CD14-positive monocyte (primary cell): ENCODE measurements at regions of chr12 and their contacts with region 1.

Region 1: GRCh38 chr12:56117778-56118687 is at the start of gene ZC3H10:
- DNase-seq: peak; percentile 100
- H3K4me3 ChIP-seq: peak within 1 kb of the TSS; percentile 89 to 97 (median 89)
- H3K4me3 Mint-ChIP-seq: peak within 1 kb of the TSS; percentile 95 to 98
- H3K27ac ChIP-seq: peak within 1 kb of the TSS; percentile 92 to 98
- H3K27ac Mint-ChIP-seq: peak within 1 kb of the TSS; percentile 97 to 100 (median 99)
- H3K4me1 ChIP-seq: peaks cover 30 to 35% of the 10 kb centered on the region in 2 donors
- H3K4me1 Mint-ChIP-seq: peaks cover 38% of the 10 kb centered on the region
- H3K27me3 ChIP-seq: no peaks in the 10 kb centered on the region
- H3K27me3 Mint-ChIP-seq: no peaks in the 10 kb centered on the region
- CTCF ChIP-seq: peak; percentile 44
- polyA plus RNA-seq, gene ZC3H10: 1.7 to 3.1 (median 1.8) TPM

Region 2: GRCh38 chr12:55829967-55830600 is 287.9 kb before region 1 on chr12:
- intact Hi-C with region 1: loop called in 1 of 2 experiments (anchors 10 kb)
- DNase-seq: peak in 1 of 3 donors; percentile 11
- H3K4me3 ChIP-seq: peak overlapping the region; percentile 80 to 97 (median 89)
- H3K4me3 Mint-ChIP-seq: peak overlapping the region; percentile 96
- H3K27ac ChIP-seq: peak overlapping the region; percentile 73 to 87
- H3K27ac Mint-ChIP-seq: peak overlapping the region; percentile 89 to 96 (median 94)
- H3K4me1 ChIP-seq: peaks cover 47 to 54% of the 10 kb centered on the region in 2 donors
- H3K4me1 Mint-ChIP-seq: peaks cover 52% of the 10 kb centered on the region
- H3K27me3 ChIP-seq: no peaks in the 10 kb centered on the region
- H3K27me3 Mint-ChIP-seq: peaks cover 0 to 2% (median 0%) of the 10 kb centered on the region in 3 donors
- CTCF ChIP-seq: no peak

Region 3: DNA sequence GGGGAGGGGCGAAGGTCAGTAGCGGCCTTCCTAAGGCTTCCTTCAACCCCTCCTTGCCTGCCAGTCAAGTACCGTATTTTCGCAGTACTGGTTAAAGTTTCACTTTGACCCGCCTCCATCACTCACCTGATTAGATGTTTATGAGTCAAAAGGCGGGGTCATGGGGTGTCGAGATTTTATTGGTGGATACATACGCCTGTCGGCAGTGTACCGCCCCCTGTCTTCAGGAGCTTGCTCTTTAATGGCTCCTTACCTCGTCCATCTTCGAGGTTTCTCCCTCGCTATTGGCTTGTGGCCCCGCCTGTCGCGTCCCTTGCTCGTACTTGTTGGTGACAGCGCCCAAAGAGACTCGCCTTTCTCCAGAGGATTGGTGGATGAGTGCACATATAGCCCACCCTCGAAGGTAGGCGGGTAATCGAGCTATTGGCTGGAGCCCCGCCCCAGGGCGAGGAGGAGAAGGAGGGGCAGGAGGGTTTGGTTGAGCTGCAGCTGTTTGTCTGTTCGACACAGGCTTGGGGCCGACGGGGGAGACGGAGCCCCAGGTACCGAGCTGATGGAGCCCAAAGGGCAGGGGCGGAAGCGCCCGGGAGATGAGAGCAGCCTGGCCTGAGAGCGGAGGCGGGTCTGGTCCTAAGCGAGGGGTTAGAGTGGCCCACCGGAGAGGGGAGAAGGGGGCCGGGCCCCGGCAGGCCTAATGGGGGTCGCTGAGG is 144.3 kb before region 1 on chr12 and contains the start of gene RAB5B:
- intact Hi-C with region 1: loop called in 1 of 2 experiments (anchors 10 kb)
- DNase-seq: peak; percentile 99 to 100 (median 100)
- H3K4me3 ChIP-seq: peak within 1 kb of the TSS; percentile 82 to 98 (median 92)
- H3K4me3 Mint-ChIP-seq: no peak within 1 kb of the TSS
- H3K27ac ChIP-seq: peak within 1 kb of the TSS; percentile 83 to 90
- H3K27ac Mint-ChIP-seq: no peak within 1 kb of the TSS
- H3K4me1 ChIP-seq: peaks cover 26 to 42% of the 10 kb centered on the region in 2 donors
- H3K4me1 Mint-ChIP-seq: peaks cover 24% of the 10 kb centered on the region
- H3K27me3 ChIP-seq: no peaks in the 10 kb centered on the region
- H3K27me3 Mint-ChIP-seq: peaks cover 0 to 2% (median 0%) of the 10 kb centered on the region in 3 donors
- CTCF ChIP-seq: no peak
- polyA plus RNA-seq, gene RAB5B: 44.0 to 63.0 (median 48.5) TPM

Region 4: GRCh38 chr12:56152318-56153033 is 34.4 kb after region 1 on chr12 and contains the start of gene MYL6B:
- intact Hi-C with region 1: loop called in 1 of 2 experiments (anchors 5 kb)
- DNase-seq: peak; percentile 90 to 93 (median 93)
- H3K4me3 ChIP-seq: peak within 1 kb of the TSS; percentile 68 to 83 (median 68)
- H3K4me3 Mint-ChIP-seq: peak within 1 kb of the TSS; percentile 85 to 91
- H3K27ac ChIP-seq: peak within 1 kb of the TSS; percentile 86 to 90
- H3K27ac Mint-ChIP-seq: peak within 1 kb of the TSS; percentile 94 to 97 (median 97)
- H3K4me1 ChIP-seq: peaks cover 37 to 41% of the 10 kb centered on the region in 2 donors
- H3K4me1 Mint-ChIP-seq: peaks cover 35% of the 10 kb centered on the region
- H3K27me3 ChIP-seq: no peaks in the 10 kb centered on the region
- H3K27me3 Mint-ChIP-seq: peaks cover 0 to 4% (median 3%) of the 10 kb centered on the region in 3 donors
- CTCF ChIP-seq: no peak
- polyA plus RNA-seq, gene MYL6B: 2.7 to 4.3 (median 4.1) TPM

Region 5: DNA sequence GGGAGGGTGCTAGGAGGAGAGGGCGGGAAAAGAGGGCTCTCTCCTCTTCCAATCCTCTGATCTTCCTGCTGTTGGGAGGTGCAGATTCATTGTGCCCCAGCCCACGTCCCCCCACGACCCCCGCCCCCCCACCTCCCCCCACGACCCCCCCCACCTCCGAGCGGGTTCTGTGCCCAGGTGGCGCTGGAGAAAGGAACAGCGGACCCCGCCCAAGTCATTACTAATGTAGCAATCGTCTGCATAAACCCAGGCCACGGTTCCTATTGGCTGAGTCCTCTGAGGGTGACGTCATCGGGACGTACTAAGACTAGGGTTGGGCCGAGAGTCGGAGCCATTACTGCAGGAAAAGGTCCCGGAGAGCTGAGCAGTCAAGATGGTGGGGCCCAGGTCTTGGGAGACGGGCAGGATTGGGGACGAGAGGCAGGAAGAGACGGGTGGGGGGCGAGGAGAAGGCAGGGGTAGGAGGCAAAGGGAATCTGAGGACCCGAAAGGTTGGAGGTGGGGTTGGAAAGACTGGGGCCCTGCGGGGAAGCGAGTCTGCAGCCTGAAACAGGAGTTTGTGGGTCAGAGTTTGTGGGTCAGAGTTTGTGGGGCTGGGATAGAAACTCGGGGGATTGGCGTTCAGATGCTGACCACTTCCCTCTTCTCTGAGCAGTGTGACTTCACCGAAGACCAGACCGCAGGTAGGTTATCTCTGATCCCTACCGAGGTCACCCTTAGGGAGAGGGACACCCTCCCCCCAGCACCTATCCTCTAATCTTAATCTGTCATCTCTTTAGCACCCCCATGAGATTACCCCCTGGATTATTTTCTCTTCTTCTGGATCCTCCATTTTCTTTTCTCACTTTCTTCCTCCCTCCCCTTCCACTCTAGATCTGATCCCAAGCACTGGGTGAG is 40.2 kb after region 1 on chr12 and contains the start of gene MYL6:
- intact Hi-C with region 1: loop called (anchors 2 to 5 kb)
- DNase-seq: peak; percentile 94 to 98 (median 97)
- H3K4me3 ChIP-seq: peak within 1 kb of the TSS; percentile 77 to 96 (median 84)
- H3K4me3 Mint-ChIP-seq: peak within 1 kb of the TSS; percentile 97 to 99
- H3K27ac ChIP-seq: peak within 1 kb of the TSS; percentile 90 to 94
- H3K27ac Mint-ChIP-seq: peak within 1 kb of the TSS; percentile 97 to 99 (median 98)
- H3K4me1 ChIP-seq: peaks cover 35 to 44% of the 10 kb centered on the region in 2 donors
- H3K4me1 Mint-ChIP-seq: peaks cover 38% of the 10 kb centered on the region
- H3K27me3 ChIP-seq: no peaks in the 10 kb centered on the region
- H3K27me3 Mint-ChIP-seq: peaks cover 0 to 3% (median 2%) of the 10 kb centered on the region in 3 donors
- CTCF ChIP-seq: no peak
- polyA plus RNA-seq, gene MYL6: 1,962 to 3,939 (median 3,189) TPM

Region 6: GRCh38 chr12:56224102-56224701 is 106.2 kb after region 1 on chr12 and contains the start of gene NABP2:
- intact Hi-C with region 1: loop called in 1 of 2 experiments (anchors 2 kb)
- DNase-seq: peak; percentile 87 to 96 (median 95)
- H3K4me3 ChIP-seq: peak within 1 kb of the TSS; percentile 40 to 96 (median 40)
- H3K4me3 Mint-ChIP-seq: peak within 1 kb of the TSS; percentile 76 to 85
- H3K27ac ChIP-seq: peak within 1 kb of the TSS in 1 of 2 donors; percentile 94
- H3K27ac Mint-ChIP-seq: peak within 1 kb of the TSS; percentile 89 to 99 (median 92)
- H3K4me1 ChIP-seq: peaks cover 44 to 48% of the 10 kb centered on the region in 2 donors
- H3K4me1 Mint-ChIP-seq: peaks cover 42% of the 10 kb centered on the region
- H3K27me3 ChIP-seq: no peaks in the 10 kb centered on the region
- H3K27me3 Mint-ChIP-seq: no peaks in the 10 kb centered on the region
- CTCF ChIP-seq: peak; percentile 90
- polyA plus RNA-seq, gene NABP2: 2.7 to 10.1 (median 3.2) TPM